Vagina (tissue), 2 donors: ENCODE measurements at regions of chr12 and their contacts with region 1.

Region 1: GRCh38 chr12:2583091-2583497 is 211.7 kb upstream of the FKBP4 start:
- DNase-seq: no peak
- H3K4me3 ChIP-seq: peak overlapping the region; percentile 6 to 29
- H3K27ac ChIP-seq: no peak overlapping the region
- H3K4me1 ChIP-seq: peaks cover 13% of the 10 kb centered on the region
- H3K27me3 ChIP-seq: no peaks in the 10 kb centered on the region
- CTCF ChIP-seq: peak; percentile 64 to 92 (median 89)
- POLR2A ChIP-seq: no peak

Region 2: GRCh38 chr12:2291182-2291832 is 291.8 kb before region 1 on chr12:
- intact Hi-C with region 1: loop called (anchors 10 kb)
- DNase-seq: no peak
- H3K4me3 ChIP-seq: no peak overlapping the region
- H3K27ac ChIP-seq: no peak overlapping the region
- H3K4me1 ChIP-seq: peaks cover 50% of the 10 kb centered on the region
- H3K27me3 ChIP-seq: no peaks in the 10 kb centered on the region
- CTCF ChIP-seq: peak in 2 of 3 experiments; percentile 36 to 40
- POLR2A ChIP-seq: no peak